Prostate gland (tissue), 2 donors: ENCODE measurements at regions of chr20 and their contacts with region 1.

Region 1: GRCh38 chr20:16517946-16518783 is 55.1 kb downstream of the KIF16B start:
- DNase-seq: peak; percentile 50
- H3K4me3 ChIP-seq: no peak overlapping the region
- H3K27ac ChIP-seq: no peak overlapping the region
- H3K4me1 ChIP-seq: no peaks in the 10 kb centered on the region
- H3K27me3 ChIP-seq: no peaks in the 10 kb centered on the region
- CTCF ChIP-seq: peak in 3 of 4 experiments; percentile 57 to 65 (median 58)
- POLR2A ChIP-seq: no peak

Region 2: GRCh38 chr20:16485401-16485800 is 32.8 kb before region 1 on chr20:
- intact Hi-C with region 1: no loop called
- DNase-seq: no peak
- H3K4me3 ChIP-seq: no peak overlapping the region
- H3K27ac ChIP-seq: no peak overlapping the region
- H3K4me1 ChIP-seq: no peaks in the 10 kb centered on the region
- H3K27me3 ChIP-seq: no peaks in the 10 kb centered on the region
- CTCF ChIP-seq: no peak
- POLR2A ChIP-seq: no peak

Region 3: GRCh38 chr20:16639027-16639941 is 121.1 kb after region 1 on chr20:
- intact Hi-C with region 1: loop called (anchors 5 kb)
- DNase-seq: no peak
- H3K4me3 ChIP-seq: no peak overlapping the region
- H3K27ac ChIP-seq: no peak overlapping the region
- H3K4me1 ChIP-seq: no peaks in the 10 kb centered on the region
- H3K27me3 ChIP-seq: no peaks in the 10 kb centered on the region
- CTCF ChIP-seq: no peak
- POLR2A ChIP-seq: no peak

Region 4: GRCh38 chr20:16761305-16761829 is 243.2 kb after region 1 on chr20:
- intact Hi-C with region 1: loop called (anchors 10 kb)
- DNase-seq: peak; percentile 45
- H3K4me3 ChIP-seq: no peak overlapping the region
- H3K27ac ChIP-seq: no peak overlapping the region
- H3K4me1 ChIP-seq: peaks cover 6% of the 10 kb centered on the region
- H3K27me3 ChIP-seq: no peaks in the 10 kb centered on the region
- CTCF ChIP-seq: peak; percentile 14 to 79 (median 67)
- POLR2A ChIP-seq: no peak